ENCODE measurements at regions of chr15 and their contacts with region 1.

Region 1: GRCh38 chr15:72199711-72200212 is 2.2 kb upstream of the GRAMD2A start:
- DNase-seq: peak; percentile 62 to 82
- H3K4me3 ChIP-seq: no peak overlapping the region
- H3K27ac ChIP-seq: 0 out of 2 replicates have a peak overlapping the region, but pooled peaks have one; percentile 10
- H3K4me1 ChIP-seq: peaks cover 9% of the 10 kb centered on the region
- H3K27me3 ChIP-seq: no peaks in the 10 kb centered on the region
- CTCF ChIP-seq: peak; percentile 90

Region 2: DNA sequence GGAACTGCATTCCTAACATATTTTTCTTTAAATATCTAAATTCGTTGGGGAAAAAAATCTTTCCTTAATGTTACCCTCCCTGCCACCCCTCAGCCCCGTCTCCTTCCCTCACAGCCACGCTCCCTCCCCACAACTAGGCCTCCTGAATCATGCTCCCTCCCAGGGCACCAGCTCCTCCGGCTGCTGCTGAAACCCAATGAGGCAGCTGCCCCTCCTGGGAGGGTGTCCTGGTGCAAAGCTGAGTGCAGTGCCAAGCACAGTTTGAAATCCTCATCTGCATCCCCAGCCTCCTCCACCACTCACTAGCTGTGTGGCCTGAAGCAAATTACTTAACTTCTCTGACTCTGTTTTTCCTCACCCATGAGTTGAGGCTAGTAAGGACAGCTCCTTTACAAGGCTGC is 392.1 kb before region 1 on chr15:
- CTCF ChIA-PET with region 1: interaction called, 15 read pairs
- POLR2A ChIA-PET with region 1: no interaction called
- intact Hi-C with region 1: no loop called
- DNase-seq: no peak
- H3K4me3 ChIP-seq: no peak overlapping the region
- H3K27ac ChIP-seq: no peak overlapping the region
- H3K4me1 ChIP-seq: peaks cover 7% of the 10 kb centered on the region; the same call in 1 of the 2 replicates
- H3K27me3 ChIP-seq: no peaks in the 10 kb centered on the region
- CTCF ChIP-seq: no peak

Region 3: GRCh38 chr15:72176159-72176558 is 23.6 kb before region 1 on chr15:
- CTCF ChIA-PET with region 1: interaction called, 28 read pairs
- POLR2A ChIA-PET with region 1: no interaction called
- intact Hi-C with region 1: no loop called
- DNase-seq: no peak
- H3K4me3 ChIP-seq: no peak overlapping the region
- H3K27ac ChIP-seq: no peak overlapping the region
- H3K4me1 ChIP-seq: peaks cover 39% of the 10 kb centered on the region
- H3K27me3 ChIP-seq: no peaks in the 10 kb centered on the region
- CTCF ChIP-seq: no peak

Region 4: DNA sequence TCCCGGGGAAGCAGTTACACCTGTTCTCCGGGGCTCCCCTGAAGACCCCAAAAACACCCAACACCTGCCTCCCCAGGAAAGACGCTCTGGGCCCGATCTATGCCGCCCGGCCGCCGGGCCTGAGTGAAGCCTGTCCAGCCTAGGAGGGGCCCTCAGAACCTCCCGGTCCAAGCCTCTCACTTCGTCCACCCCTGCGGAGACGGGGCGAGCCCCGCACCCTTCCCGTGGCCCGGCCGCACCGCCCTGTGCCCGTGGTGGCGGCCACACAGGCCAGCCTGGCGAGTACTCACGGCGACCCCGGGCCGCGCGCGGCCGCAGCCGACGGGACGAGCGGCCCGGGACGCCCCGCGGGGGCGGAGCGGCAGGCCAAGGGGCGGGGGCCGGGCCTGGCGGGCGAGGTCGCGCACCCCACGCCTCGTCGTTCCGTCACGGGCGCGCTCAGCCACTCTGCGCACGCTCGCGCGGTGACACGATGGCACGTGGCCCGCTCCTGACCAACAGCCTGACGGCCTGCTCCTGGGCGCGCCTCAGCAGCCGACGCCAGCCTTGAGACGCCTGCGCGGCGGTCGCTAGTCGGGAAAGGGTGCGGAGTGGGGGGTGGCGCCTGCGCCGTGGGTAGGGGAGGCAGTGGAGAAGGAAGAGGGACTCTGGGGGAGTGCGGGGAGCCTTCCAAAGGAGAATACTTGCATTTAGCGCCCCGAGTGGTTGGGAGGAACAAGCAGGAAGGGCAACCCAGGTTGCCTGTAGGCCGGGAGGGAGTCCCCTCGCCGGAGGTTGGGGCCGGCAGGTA is 72.6 kb after region 1 on chr15 and contains the start of gene PARP6:
- CTCF ChIA-PET with region 1: no interaction called
- POLR2A ChIA-PET with region 1: no interaction called
- intact Hi-C with region 1: loop called (anchors 2 kb)
- DNase-seq: peak; percentile 90 to 99
- H3K4me3 ChIP-seq: peak within 1 kb of the TSS; percentile 85
- H3K27ac ChIP-seq: peak within 1 kb of the TSS; percentile 48; the same call in 1 of the 2 replicates
- H3K4me1 ChIP-seq: peaks cover 18% of the 10 kb centered on the region
- H3K27me3 ChIP-seq: no peaks in the 10 kb centered on the region
- CTCF ChIP-seq: no peak; the same call in 1 of the 2 replicates
- total RNA-seq, gene PARP6: 51.3 and 65.9 TPM in 2 replicates

Region 5: GRCh38 chr15:73024168-73024567 is 824.4 kb after region 1 on chr15:
- CTCF ChIA-PET with region 1: interaction called, 24 read pairs
- POLR2A ChIA-PET with region 1: no interaction called
- intact Hi-C with region 1: no loop called
- DNase-seq: no peak
- H3K4me3 ChIP-seq: no peak overlapping the region
- H3K27ac ChIP-seq: no peak overlapping the region
- H3K4me1 ChIP-seq: no peaks in the 10 kb centered on the region
- H3K27me3 ChIP-seq: peaks cover 77% of the 10 kb centered on the region
- CTCF ChIP-seq: no peak

Region 6: DNA sequence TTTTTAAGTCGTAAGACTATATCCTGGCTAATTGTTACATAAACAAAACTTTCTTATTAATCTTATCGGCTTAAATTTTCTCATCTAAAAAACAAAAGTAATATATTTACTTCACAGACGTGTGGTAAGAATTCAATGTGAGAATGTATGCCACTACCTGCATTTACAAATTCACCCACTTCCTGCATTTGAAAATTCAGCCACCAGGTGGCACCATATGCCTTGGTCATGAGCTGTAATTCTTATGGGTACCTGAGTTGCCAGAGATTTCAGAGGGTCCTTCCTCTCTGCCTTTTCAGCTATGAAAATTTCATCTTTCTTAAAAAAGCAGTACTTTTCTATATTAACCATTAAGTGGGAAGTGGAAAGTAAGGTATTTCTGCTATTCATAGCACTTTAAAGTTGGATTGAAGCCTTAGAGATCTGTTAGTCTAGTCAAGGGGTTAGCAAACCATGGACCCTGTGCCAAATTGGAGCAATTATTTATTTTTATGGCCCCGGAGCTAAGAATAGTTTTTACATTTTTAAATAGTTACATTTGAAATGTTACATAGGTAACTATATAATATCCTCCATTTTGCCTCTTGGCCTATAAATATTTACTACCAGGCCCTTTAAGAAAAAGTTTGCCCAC is 1041.2 kb after region 1 on chr15:
- CTCF ChIA-PET with region 1: no interaction called
- POLR2A ChIA-PET with region 1: interaction called, 19 read pairs
- intact Hi-C with region 1: no loop called
- DNase-seq: peak; percentile 49 to 53
- H3K4me3 ChIP-seq: no peak overlapping the region
- H3K27ac ChIP-seq: no peak overlapping the region
- H3K4me1 ChIP-seq: no peaks in the 10 kb centered on the region
- H3K27me3 ChIP-seq: no peaks in the 10 kb centered on the region
- CTCF ChIP-seq: peak; percentile 93